Activated T-helper 1 cell treated with anti-CD3 and anti-CD28 coated beads, Interleukin-12 subunit alpha, Interleukin-12 subunit beta, Interleukin-2, Interleukin-4 antibody, amounts not matched to agents 30 ng/mL and 10 ng/mL and 1 ng/mL, durations not matched to agents 14 hours and 24 hours and 36 hours (primary cell): ENCODE measurements at regions of chr7 and their contacts with region 1.

Region 1: DNA sequence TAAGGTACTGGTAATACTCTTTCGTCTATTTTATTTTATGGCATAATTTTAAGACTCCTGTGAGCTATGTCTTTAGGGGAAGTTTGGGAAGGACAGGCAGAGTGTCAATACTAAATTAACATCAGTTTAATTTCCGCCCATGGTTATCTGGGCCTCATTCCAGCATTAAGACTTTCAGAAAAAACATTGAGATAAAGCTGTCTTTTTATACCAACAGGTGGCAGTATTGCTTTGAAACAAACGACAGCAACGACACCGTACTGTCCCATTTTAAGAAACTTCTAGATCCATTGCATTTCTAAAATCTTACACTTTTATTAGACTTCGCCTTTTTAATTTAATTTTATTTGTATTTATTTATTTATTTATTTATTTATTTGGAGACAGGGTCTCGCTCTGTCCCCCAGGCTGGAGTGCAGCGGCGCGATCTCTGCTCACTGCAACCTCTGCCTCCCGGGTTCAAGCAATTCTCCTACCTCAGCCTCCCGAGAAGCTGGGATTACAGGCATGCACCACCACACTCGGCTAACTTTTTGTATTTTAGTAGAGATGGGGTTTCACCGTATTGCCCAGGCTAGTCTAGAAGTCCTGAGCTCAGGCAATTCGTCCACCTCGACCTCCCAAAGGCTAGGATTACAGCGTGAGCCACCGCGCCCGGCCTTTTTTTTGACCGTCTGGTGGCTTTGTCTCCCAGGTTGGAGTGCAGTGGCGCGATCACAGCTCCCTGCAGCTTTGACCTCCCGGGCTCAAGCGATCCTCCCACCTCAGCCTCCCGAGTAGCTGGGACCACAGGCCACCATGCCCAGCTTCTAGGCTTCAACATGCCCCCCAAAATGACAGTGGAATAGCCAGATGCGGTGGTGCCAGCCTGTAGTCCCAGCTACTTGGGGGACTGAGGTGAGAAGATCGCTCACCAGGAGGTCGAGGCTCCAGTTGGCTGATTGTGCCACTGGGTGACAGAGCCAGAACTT is 78.7 kb upstream of the C1GALT1 start:
- DNase-seq: no peak
- H3K4me3 Mint-ChIP-seq: no peak overlapping the region
- H3K27ac Mint-ChIP-seq: no peak overlapping the region
- H3K4me1 Mint-ChIP-seq: peaks cover 16% of the 10 kb centered on the region
- H3K27me3 Mint-ChIP-seq: no peaks in the 10 kb centered on the region

Region 2: DNA sequence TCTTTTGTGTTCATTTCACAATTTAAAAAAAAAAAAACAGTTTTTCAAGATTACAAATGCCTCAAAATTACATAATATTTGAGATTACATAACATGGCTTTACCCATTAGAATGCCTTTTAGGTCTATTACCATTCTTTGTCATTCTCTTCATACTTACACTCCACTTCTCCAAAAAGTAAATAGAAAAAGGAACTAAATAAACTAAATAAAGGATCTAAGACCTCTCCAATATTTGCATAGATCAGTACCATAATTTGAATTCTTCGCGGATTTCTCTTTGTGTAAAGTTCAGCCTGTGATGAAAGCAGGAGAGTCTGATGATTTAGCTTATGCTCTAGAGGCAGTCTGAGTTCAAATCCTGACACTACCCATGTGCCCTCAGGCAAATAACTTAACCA is 22.3 kb after region 1 on chr7:
- intact Hi-C with region 1: no loop called
- DNase-seq: no peak
- H3K4me3 Mint-ChIP-seq: no peak overlapping the region
- H3K27ac Mint-ChIP-seq: no peak overlapping the region
- H3K4me1 Mint-ChIP-seq: no peaks in the 10 kb centered on the region
- H3K27me3 Mint-ChIP-seq: peaks cover 2% of the 10 kb centered on the region

Region 3: GRCh38 chr7:7424151-7424873 is 320.7 kb after region 1 on chr7:
- intact Hi-C with region 1: loop called (anchors 10 kb)
- DNase-seq: no peak
- H3K4me3 Mint-ChIP-seq: peak overlapping the region; percentile 67
- H3K27ac Mint-ChIP-seq: no peak overlapping the region
- H3K4me1 Mint-ChIP-seq: no peaks in the 10 kb centered on the region
- H3K27me3 Mint-ChIP-seq: peaks cover 4% of the 10 kb centered on the region

Region 4: DNA sequence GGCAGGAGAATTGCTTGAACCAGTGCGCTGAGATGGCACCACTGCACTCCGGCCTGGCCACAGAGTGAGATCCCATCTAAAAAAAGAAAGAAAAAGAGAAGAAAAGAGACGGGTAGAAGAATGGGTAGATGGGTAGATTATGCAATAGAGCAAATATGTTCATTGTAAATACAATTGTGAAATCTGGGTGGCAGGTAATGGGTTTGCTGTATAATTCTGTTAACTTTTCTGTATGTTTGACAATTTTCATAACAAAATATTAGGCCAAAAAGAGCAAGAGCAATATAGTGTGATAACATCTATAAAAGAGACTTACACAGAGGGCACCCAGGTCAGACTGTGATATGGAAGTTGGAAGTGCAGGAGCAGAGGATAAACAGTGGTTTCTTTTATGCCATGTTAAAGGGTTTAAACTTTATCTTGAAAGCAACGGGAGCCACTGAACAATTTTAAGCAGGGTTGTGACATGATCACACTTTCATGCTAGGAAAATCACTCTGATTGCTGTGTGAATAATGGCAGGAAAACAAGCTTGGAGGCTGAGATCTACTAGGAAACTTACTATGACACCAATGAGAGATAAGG is 438.7 kb after region 1 on chr7:
- intact Hi-C with region 1: loop called (anchors 1 kb)
- DNase-seq: no peak
- H3K4me3 Mint-ChIP-seq: no peak overlapping the region
- H3K27ac Mint-ChIP-seq: no peak overlapping the region
- H3K4me1 Mint-ChIP-seq: no peaks in the 10 kb centered on the region
- H3K27me3 Mint-ChIP-seq: peaks cover 8% of the 10 kb centered on the region